Activated B cell treated with CpG ODN at 0.5 μM for 24 hours (primary cell): ENCODE measurements at regions of chr2 and their contacts with region 1.

Region 1: DNA sequence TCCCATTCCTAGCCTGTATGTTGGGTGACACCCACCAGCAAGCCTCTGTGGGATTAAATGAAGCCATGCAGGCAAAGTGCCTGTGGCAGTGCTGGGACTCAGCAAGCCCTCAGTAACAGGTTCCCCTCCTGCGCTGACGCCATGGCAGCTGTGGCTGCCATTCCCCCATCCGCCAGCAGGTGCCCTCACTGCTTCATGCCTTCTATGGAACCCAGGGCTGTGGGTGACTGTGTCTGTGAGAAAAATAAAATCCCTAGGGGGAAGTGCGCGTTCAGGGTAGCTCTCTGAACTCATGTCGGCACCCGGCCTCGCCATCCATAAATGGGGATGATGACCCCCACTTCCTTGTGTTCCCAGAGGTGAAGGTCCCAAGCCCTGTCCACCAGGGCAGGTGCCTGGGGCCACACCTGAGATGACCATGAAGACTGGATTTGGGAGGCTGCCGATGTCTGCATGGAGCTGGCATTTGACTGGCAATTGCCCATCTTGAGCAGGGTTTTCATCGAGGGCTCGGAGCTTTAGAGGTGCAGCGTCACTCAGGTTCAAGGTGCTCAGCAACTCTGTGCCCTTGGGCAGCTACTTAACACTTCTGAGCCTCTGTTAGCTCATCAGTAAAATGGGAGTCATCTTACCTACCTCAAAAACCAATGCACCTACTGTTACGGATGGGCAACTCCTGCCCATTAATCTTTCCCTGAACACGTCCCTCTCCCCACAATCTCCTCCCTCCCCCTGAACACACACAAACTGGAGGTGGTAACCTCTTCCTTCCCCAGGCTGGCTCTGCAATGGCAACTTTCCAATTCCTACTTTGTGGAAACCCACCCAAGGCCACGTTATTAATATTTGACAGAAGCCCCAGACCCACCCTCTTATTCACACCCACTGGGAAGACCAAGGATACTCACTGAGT is 2.9 kb upstream of the MAL start:
- DNase-seq: no peak
- ATAC-seq: peak; percentile 54
- H3K4me3 Mint-ChIP-seq: no peak overlapping the region
- H3K27ac Mint-ChIP-seq: no peak overlapping the region
- H3K4me1 Mint-ChIP-seq: peaks cover 10% of the 10 kb centered on the region
- H3K27me3 Mint-ChIP-seq: peaks cover 50% of the 10 kb centered on the region
- CTCF ChIP-seq: no peak

Region 2: DNA sequence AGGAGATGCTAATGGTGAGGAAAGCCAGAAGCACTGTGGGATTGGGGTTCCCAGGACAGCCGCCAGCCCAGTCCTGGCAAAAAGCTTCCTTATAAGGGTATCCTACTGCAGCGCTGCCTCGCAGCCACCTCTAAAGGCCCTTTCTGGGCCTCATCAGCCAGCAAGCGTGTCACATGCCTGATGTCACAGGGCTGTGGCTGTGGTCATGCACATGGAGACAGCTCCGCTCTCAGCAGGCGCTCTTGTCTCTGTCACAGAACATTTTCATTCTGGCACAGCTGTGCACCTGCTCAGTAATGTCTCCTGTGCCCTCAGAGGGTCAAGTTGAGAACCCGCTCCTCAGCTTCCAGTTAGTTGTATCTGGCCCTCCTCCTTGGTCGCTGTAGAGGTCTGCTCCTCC is 14.7 kb before region 1 on chr2:
- CTCF ChIA-PET with region 1: no interaction called
- POLR2A ChIA-PET with region 1: no interaction called
- intact Hi-C with region 1: no loop called
- DNase-seq: no peak
- ATAC-seq: no peak
- H3K4me3 Mint-ChIP-seq: no peak overlapping the region
- H3K27ac Mint-ChIP-seq: no peak overlapping the region
- H3K4me1 Mint-ChIP-seq: no peaks in the 10 kb centered on the region
- H3K27me3 Mint-ChIP-seq: peaks cover 5% of the 10 kb centered on the region
- CTCF ChIP-seq: no peak

Region 3: GRCh38 chr2:95115418-95115817 is 92.9 kb after region 1 on chr2:
- CTCF ChIA-PET with region 1: interaction called, 3 read pairs
- POLR2A ChIA-PET with region 1: no interaction called
- intact Hi-C with region 1: loop called (anchors 1 kb)
- DNase-seq: peak; percentile 21
- ATAC-seq: peak; percentile 92
- H3K4me3 Mint-ChIP-seq: no peak overlapping the region
- H3K27ac Mint-ChIP-seq: no peak overlapping the region
- H3K4me1 Mint-ChIP-seq: peaks cover 34% of the 10 kb centered on the region
- H3K27me3 Mint-ChIP-seq: no peaks in the 10 kb centered on the region
- CTCF ChIP-seq: peak; percentile 57